Activated CD4-positive, alpha-beta memory T cell treated with anti-CD3 and anti-CD28 coated beads, Interleukin-2, amount 10 ng/mL, durations not matched to agents 7 days and 5 days (primary cell): ENCODE measurements at regions of chr1 and their contacts with region 1.

Region 1: GRCh38 chr1:92994105-92994712 is 32.9 kb upstream of the DIPK1A start:
- DNase-seq: peak; percentile 74
- H3K4me3 Mint-ChIP-seq: no peak overlapping the region
- H3K27ac Mint-ChIP-seq: no peak overlapping the region
- H3K4me1 Mint-ChIP-seq: peaks cover 51% of the 10 kb centered on the region
- H3K27me3 Mint-ChIP-seq: peaks cover 4% of the 10 kb centered on the region

Region 2: GRCh38 chr1:92851729-92852128 is 142.5 kb before region 1 on chr1:
- CTCF ChIA-PET with region 1: interaction called, 37 read pairs
- POLR2A ChIA-PET with region 1: no interaction called
- DNase-seq: no peak
- H3K4me3 Mint-ChIP-seq: no peak overlapping the region
- H3K27ac Mint-ChIP-seq: no peak overlapping the region
- H3K4me1 Mint-ChIP-seq: peaks cover 12% of the 10 kb centered on the region
- H3K27me3 Mint-ChIP-seq: no peaks in the 10 kb centered on the region

Region 3: GRCh38 chr1:92872719-92873118 is 121.5 kb before region 1 on chr1:
- CTCF ChIA-PET with region 1: interaction called, 19 read pairs
- POLR2A ChIA-PET with region 1: no interaction called
- DNase-seq: no peak
- H3K4me3 Mint-ChIP-seq: no peak overlapping the region
- H3K27ac Mint-ChIP-seq: no peak overlapping the region
- H3K4me1 Mint-ChIP-seq: peaks cover 9% of the 10 kb centered on the region
- H3K27me3 Mint-ChIP-seq: no peaks in the 10 kb centered on the region

Region 4: GRCh38 chr1:92951141-92951582 is 43.0 kb before region 1 on chr1:
- CTCF ChIA-PET with region 1: interaction called, 176 read pairs
- POLR2A ChIA-PET with region 1: interaction called, 9 read pairs
- DNase-seq: no peak
- H3K4me3 Mint-ChIP-seq: no peak overlapping the region
- H3K27ac Mint-ChIP-seq: no peak overlapping the region
- H3K4me1 Mint-ChIP-seq: peaks cover 18% of the 10 kb centered on the region
- H3K27me3 Mint-ChIP-seq: no peaks in the 10 kb centered on the region

Region 5: GRCh38 chr1:92975551-92976232 is 18.5 kb before region 1 on chr1:
- CTCF ChIA-PET with region 1: interaction called, 151 read pairs
- POLR2A ChIA-PET with region 1: interaction called, 31 read pairs
- DNase-seq: peak; percentile 53
- H3K4me3 Mint-ChIP-seq: no peak overlapping the region
- H3K27ac Mint-ChIP-seq: peak overlapping the region; percentile 82
- H3K4me1 Mint-ChIP-seq: peaks cover 75% of the 10 kb centered on the region
- H3K27me3 Mint-ChIP-seq: no peaks in the 10 kb centered on the region

Region 6: GRCh38 chr1:93005252-93005598 is 11.0 kb after region 1 on chr1:
- CTCF ChIA-PET with region 1: interaction called, 22 read pairs
- POLR2A ChIA-PET with region 1: no interaction called
- DNase-seq: no peak
- H3K4me3 Mint-ChIP-seq: no peak overlapping the region
- H3K27ac Mint-ChIP-seq: no peak overlapping the region
- H3K4me1 Mint-ChIP-seq: no peaks in the 10 kb centered on the region
- H3K27me3 Mint-ChIP-seq: peaks cover 28% of the 10 kb centered on the region

Region 7: DNA sequence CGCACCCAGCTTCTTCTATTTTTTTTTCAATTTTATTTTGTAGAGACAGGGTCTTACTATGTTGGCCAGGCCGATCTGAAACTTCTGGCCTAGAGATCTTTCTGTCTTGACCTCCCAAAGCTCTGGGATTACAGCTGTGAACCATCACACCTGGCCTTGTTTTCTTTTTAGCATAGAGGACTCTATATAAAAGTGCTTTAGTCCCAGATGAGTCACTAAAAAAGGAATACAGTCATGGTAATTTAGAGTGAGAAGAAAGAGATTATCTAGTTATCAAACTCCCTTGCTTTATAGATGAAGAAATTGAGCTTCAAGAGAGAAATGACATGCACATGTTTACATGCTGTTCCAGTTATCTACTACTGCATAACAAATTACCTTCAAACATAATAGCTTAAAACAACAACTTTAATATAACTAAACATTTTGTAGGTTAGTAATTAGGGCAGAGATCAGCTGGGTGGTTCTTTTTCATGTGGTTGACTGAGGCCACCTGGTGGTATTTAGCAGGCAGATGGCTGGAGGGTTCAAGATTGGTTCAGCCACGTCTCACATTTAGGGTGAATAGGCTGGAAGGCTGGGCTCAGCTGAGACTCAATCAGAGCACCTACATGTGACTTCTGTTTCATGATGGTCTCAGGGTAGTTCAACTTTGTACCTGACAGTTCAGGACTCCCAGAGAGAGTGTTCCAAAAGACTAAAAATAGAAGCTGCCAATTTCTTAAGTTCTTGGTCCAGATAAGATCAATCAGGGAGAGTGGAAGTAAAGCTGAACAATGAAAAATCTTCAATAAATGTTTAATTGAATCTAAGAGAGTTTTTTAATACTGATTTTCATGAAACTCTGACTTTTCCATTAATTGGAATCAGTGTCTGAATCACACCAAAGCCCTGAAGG is 67.9 kb after region 1 on chr1:
- CTCF ChIA-PET with region 1: interaction called, 18 read pairs
- POLR2A ChIA-PET with region 1: no interaction called
- DNase-seq: peak; percentile 51
- H3K4me3 Mint-ChIP-seq: no peak overlapping the region
- H3K27ac Mint-ChIP-seq: no peak overlapping the region
- H3K4me1 Mint-ChIP-seq: no peaks in the 10 kb centered on the region
- H3K27me3 Mint-ChIP-seq: peaks cover 29% of the 10 kb centered on the region